ENCODE measurements at regions of chr12 and their contacts with region 1.

Region 1: DNA sequence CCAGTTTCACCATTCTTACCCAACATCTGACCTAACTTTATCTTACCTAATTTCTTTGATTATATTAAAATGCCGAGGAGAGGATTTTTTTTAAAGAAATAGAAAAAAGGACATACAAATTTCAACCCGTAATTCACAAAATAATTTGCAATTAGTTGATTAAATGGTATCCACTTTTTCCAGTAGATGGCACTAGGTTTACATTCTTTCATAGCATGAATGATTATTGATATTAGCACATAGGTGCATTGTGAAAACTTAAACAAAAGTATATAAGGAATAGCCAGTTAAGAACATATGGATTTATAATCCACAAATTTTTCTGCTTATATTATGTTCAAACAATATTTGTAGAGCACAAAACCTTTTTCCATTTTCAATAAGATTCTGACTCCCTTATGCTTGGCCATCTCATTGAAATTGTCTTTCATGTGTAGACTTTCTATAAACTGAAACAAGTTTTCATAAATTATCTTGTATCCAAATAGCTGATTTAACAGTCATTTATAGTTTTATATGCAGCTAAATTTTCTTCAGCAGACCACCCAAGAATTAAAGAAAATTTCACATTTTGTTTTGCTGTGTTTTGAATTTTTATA is 35.3 kb downstream of the MSRB3 start:
- DNase-seq: no peak
- ATAC-seq: no peak
- H3K4me3 ChIP-seq: no peak overlapping the region
- H3K27ac ChIP-seq: no peak overlapping the region
- H3K4me1 ChIP-seq: peaks cover 0 to 5% (median 2%) of the 10 kb centered on the region in 9 donors
- H3K27me3 ChIP-seq: no peaks in the 10 kb centered on the region
- CTCF ChIP-seq: peak in 7 of 9 donors; percentile 35 to 62 (median 48)

Region 2: GRCh38 chr12:65055859-65056258 is 258.0 kb before region 1 on chr12:
- intact Hi-C with region 1: no loop called
- DNase-seq: no peak
- ATAC-seq: no peak
- H3K4me3 ChIP-seq: no peak overlapping the region
- H3K27ac ChIP-seq: no peak overlapping the region
- H3K4me1 ChIP-seq: no peaks in the 10 kb centered on the region
- H3K27me3 ChIP-seq: peaks cover 0 to 34% (median 10%) of the 10 kb centered on the region in 7 donors
- CTCF ChIP-seq: no peak

Region 3: DNA sequence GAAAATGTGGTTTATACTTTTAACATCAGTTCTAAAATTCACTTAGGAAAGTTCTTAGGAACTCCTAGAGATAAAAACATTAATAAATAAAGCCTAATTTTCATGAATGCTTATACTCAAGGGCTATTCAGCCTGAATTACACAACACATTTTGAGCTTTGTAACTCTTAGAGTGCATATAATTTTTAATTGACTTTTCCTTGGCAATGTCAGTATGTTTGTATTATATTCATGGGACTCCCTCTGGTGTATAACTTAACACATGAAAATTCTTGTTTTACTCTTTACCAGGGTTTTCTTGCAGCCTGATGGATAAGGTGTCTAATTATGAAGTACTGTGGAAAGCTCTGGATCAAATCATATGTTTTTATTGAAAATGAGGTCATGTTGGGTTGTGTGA is 359.9 kb after region 1 on chr12:
- intact Hi-C with region 1: loop called in 1 of 10 experiments (anchors 10 kb)
- DNase-seq: no peak
- ATAC-seq: peak in 1 of 8 donors; percentile 34
- H3K4me3 ChIP-seq: no peak overlapping the region
- H3K27ac ChIP-seq: no peak overlapping the region
- H3K4me1 ChIP-seq: no peaks in the 10 kb centered on the region
- H3K27me3 ChIP-seq: peaks cover 0 to 5% (median 0%) of the 10 kb centered on the region in 7 donors
- CTCF ChIP-seq: peak in 6 of 9 donors; percentile 16 to 46 (median 32)

Measured in heart right ventricle (tissue), 16 donors.